Right ventricle myocardium inferior (tissue), 1 donor: ENCODE measurements at regions of chr1 and their contacts with region 1.

Region 1: GRCh38 chr1:64966158-64966971 is at the start of gene JAK1:
- DNase-seq: peak; percentile 95
- ATAC-seq: peak; percentile 93
- total RNA-seq, gene JAK1: 87.3 TPM

Region 2: GRCh38 chr1:64834734-64835133 is 131.6 kb before region 1 on chr1:
- intact Hi-C with region 1: no loop called
- DNase-seq: no peak
- ATAC-seq: no peak

Region 3: DNA sequence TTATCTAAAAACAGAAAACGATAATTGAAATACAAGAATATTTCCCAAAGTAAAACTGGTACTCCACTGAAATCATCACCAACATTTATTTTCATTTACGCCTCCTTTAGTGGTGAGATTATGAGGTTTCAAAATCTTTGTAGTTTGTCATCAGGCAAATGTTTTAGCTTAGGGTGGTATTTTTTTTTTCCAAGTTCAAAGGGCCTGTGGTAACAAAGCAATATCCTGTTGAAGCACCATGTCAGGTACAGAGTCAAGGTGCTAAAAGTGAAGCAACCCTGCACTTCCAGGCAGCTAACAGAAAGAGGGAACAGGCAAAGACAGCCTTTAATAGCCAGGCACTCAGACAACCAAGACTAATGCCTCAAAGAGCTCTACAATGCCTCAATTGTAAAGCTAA is 89.2 kb before region 1 on chr1:
- intact Hi-C with region 1: loop called (anchors 5 kb)
- DNase-seq: no peak
- ATAC-seq: no peak

Region 4: DNA sequence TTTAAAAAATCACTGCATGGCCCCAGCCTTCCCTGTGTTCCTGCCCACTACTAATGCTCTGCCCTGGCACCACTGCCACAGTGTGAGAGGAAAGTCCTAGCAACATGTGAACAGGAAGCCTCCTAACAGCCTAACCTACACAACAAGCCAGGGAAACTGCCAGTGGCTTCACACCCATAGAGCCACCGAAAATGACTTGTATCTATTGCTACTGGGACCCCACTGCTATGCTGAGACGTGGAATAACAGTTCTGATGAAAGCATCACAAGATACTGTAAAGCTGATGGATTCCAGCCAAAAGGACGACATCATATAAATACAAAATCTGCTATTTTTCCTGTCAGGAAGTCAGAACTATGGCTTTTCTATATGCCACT is 74.9 kb before region 1 on chr1:
- intact Hi-C with region 1: loop called (anchors 5 kb)
- DNase-seq: no peak
- ATAC-seq: no peak

Region 5: GRCh38 chr1:65002508-65003315 is 36.3 kb after region 1 on chr1:
- intact Hi-C with region 1: loop called (anchors 5 kb)
- DNase-seq: peak; percentile 92
- ATAC-seq: peak; percentile 91